Mammary epithelial cell (primary cell): ENCODE measurements at regions of chr1 and their contacts with region 1.

Region 1: DNA sequence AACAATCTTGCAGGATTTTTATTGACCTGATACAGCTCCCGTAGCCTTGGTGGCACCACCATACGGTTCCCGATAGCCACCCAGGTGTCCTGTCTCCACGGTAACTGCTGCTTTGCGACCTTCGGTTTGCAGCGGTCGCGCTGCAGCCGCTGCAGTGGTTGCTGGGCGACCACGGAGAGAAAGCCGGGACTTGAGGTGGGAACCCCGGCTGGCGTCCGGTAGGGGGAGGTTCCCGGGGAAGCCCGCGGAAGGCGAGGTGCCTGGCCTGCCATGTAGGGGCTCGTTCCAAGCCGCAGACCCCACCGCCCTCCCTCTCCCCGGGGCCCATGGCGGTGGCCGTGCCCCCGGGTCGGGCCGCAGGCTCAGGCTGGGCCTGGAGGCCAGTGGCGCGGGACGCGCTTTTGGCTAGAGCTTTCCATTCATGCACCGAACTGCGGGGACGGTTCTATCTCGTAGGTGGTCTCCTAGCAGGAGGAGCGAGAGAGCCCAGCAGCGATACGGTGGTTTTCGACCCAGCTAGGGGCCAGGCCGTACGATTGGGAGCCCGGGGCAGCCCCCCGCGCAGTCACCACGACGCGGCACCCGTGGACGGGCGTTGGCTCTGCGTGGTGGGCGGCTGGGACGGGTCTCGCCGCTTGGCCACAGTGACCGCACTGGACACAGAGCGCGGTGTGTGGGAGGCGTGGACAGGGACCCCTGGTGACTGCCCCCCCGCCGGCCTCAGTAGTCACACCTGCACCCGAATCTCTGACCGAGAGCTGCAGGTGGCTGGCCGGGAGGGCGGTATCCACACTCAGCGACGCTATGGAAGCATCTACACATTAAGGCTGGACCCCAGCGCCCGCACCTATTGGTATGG is at the start of gene KLHDC9:
- DNase-seq: peak; percentile 67
- H3K4me3 ChIP-seq: peak within 1 kb of the TSS; percentile 33 to 66 (median 52)
- H3K27ac ChIP-seq: peak within 1 kb of the TSS; percentile 31
- H3K4me1 ChIP-seq: peaks cover 30% of the 10 kb centered on the region
- H3K27me3 ChIP-seq: no peaks in the 10 kb centered on the region
- CTCF ChIP-seq: no peak
- total RNA-seq, gene KLHDC9: 3.0 to 3.8 TPM

Region 2: DNA sequence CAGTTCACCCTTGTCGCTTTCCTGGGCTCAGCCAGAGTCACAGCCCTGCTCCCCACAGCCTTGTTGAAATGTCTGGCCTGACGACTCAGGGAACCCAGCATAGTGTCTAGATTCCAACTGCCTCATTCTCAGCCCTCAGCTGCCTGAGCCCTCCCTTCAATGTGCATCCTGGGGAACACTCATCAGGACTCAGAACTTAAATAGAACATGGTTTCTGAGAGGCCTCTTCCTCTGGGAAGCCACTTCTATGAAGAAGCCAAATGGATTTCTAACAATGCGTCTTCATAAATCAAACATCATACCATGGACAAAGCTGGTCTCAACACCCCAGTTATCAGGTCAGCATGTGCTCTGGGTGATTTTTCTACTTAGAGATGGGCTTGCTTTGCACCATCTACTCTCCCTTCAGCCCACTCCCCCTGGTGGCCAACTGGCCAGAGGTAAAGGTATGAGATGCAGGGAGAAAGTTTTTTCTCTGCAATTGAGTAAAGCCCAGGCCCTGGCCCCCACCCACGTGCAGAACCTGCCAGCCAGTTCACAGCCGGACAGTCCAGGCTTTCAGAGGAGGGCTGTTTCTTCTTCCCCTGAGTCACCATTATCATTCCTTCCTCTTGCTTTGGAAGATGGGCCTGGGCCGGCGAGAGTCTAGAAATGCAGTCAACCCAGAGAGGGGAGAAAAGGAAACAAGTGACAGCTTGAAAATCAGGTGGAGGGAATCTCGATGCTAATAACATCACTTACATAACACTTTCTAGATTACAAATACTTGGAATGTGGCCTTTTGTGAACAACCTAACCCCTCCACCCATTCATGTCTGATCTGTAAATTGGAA is 267.9 kb before region 1 on chr1:
- CTCF ChIA-PET with region 1: interaction called, 4 read pairs
- dilution Hi-C with region 1: loop called (anchors 25 kb)
- in situ Hi-C with region 1: loop called in 1 of 2 experiments (anchors 25 kb)
- intact Hi-C with region 1: loop called (anchors 1 kb)
- DNase-seq: peak; percentile 46
- H3K4me3 ChIP-seq: no peak overlapping the region
- H3K27ac ChIP-seq: no peak overlapping the region
- H3K4me1 ChIP-seq: peaks cover 17% of the 10 kb centered on the region
- H3K27me3 ChIP-seq: no peaks in the 10 kb centered on the region
- CTCF ChIP-seq: peak; percentile 63 to 90

Region 3: DNA sequence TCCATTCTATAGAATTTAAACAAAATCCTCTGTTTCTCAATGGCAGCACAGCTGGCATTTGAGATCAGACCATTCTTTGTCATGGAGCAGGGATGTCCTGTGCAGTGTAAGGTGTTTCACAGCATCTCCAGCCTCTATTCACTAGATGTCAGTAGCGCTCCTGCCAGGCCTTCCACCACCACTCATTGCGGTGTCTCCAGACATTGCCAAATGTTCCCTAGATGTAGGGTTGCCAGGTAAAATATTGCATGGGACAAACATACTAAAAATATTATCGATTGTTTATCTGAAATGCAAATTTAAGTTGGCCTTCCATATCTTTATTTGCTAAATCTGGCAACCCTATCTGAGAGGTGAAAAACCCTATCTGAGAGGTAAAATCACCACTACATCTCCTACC is 155.5 kb before region 1 on chr1:
- CTCF ChIA-PET with region 1: no interaction called
- dilution Hi-C with region 1: no loop called
- in situ Hi-C with region 1: no loop called
- intact Hi-C with region 1: loop called (anchors 1 kb)
- DNase-seq: peak; percentile 43
- H3K4me3 ChIP-seq: no peak overlapping the region
- H3K27ac ChIP-seq: no peak overlapping the region
- H3K4me1 ChIP-seq: peaks cover 4% of the 10 kb centered on the region
- H3K27me3 ChIP-seq: no peaks in the 10 kb centered on the region
- CTCF ChIP-seq: peak; percentile 13 to 59

Region 4: GRCh38 chr1:161033751-161034150 is 64.7 kb before region 1 on chr1:
- CTCF ChIA-PET with region 1: no interaction called
- dilution Hi-C with region 1: no loop called
- in situ Hi-C with region 1: no loop called
- intact Hi-C with region 1: no loop called
- DNase-seq: peak; percentile 79
- H3K4me3 ChIP-seq: no peak overlapping the region
- H3K27ac ChIP-seq: no peak overlapping the region
- H3K4me1 ChIP-seq: peaks cover 10% of the 10 kb centered on the region
- H3K27me3 ChIP-seq: no peaks in the 10 kb centered on the region
- CTCF ChIP-seq: no peak

Region 5: DNA sequence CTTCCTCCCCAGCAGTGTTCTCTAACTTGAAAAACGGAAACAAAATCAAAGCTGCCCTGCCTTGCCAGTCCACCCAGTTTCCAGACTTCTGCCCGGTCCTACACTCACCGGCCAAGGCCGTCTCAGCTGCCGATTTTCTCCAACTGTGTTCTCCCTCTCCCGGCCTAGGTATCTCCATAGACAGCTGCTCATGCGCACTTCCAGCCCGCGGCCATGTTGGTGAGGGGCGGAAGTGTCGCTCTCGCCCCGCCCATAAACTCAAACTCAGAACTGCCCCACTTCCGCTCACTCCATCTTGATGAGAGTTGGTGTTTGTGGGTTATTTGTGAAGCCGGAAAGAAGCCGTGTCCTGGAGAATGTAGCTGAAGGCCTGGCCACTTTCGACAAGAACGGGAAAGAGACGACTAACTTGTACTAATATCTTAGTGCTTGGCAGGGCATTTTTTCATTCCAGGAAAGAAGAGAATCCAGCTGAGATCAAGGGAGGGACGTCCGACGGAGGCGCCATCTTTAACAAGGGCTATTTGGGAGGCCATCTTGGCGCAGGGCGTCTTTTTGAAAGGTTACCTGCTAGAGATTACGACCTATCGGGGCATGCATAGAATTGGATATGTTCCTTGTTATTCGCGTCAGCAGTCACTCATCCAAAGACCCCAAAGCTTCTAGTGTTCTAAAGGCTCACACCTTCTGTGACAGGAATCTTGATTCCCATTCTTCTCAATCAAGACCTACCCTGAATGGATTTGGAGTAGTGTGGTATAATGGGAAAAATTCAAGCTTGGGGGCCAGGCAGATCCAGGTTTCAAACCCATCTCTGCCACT is 52.5 kb before region 1 on chr1 and contains the start of gene USF1:
- CTCF ChIA-PET with region 1: interaction called, 3 read pairs
- dilution Hi-C with region 1: loop called (anchors 5 kb)
- in situ Hi-C with region 1: loop called in 1 of 2 experiments (anchors 5 kb)
- intact Hi-C with region 1: loop called (anchors 1 kb)
- DNase-seq: peak; percentile 94
- H3K4me3 ChIP-seq: peak within 1 kb of the TSS; percentile 69 to 76 (median 70)
- H3K27ac ChIP-seq: peak within 1 kb of the TSS; percentile 81
- H3K4me1 ChIP-seq: peaks cover 8% of the 10 kb centered on the region
- H3K27me3 ChIP-seq: no peaks in the 10 kb centered on the region
- CTCF ChIP-seq: no peak
- total RNA-seq, gene USF1: 31.8 to 40.7 TPM

Region 6: DNA sequence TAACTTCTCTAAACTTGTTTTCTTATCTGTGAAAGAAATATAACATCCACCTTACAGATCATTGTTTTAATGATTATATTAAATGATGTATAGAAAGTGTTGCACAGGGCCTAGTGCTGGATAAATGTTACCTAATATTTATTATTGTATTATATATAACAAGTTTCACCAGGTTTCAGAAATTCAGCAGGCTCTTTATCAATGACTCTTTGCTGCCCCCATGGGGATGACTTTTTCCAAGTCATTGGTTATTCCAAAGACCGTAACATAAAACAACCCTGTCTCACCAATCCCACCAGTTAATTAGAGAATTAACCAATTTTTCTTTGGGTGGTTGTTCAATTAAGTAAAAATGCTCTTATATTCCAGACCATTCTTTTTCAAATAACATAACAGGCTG is 41.3 kb after region 1 on chr1:
- CTCF ChIA-PET with region 1: no interaction called
- dilution Hi-C with region 1: no loop called
- in situ Hi-C with region 1: no loop called
- intact Hi-C with region 1: loop called (anchors 1 kb)
- DNase-seq: peak; percentile 27
- H3K4me3 ChIP-seq: no peak overlapping the region
- H3K27ac ChIP-seq: no peak overlapping the region
- H3K4me1 ChIP-seq: no peaks in the 10 kb centered on the region
- H3K27me3 ChIP-seq: no peaks in the 10 kb centered on the region
- CTCF ChIP-seq: peak; percentile 37 to 57

Region 7: GRCh38 chr1:161330346-161330745 is 231.9 kb after region 1 on chr1:
- CTCF ChIA-PET with region 1: no interaction called
- dilution Hi-C with region 1: no loop called
- in situ Hi-C with region 1: no loop called
- intact Hi-C with region 1: no loop called
- DNase-seq: peak; percentile 34
- H3K4me3 ChIP-seq: no peak overlapping the region
- H3K27ac ChIP-seq: no peak overlapping the region
- H3K4me1 ChIP-seq: peaks cover 8% of the 10 kb centered on the region
- H3K27me3 ChIP-seq: no peaks in the 10 kb centered on the region
- CTCF ChIP-seq: no peak